PC-3 (cell line): ENCODE measurements at regions of chr7 and their contacts with region 1.

Region 1: DNA sequence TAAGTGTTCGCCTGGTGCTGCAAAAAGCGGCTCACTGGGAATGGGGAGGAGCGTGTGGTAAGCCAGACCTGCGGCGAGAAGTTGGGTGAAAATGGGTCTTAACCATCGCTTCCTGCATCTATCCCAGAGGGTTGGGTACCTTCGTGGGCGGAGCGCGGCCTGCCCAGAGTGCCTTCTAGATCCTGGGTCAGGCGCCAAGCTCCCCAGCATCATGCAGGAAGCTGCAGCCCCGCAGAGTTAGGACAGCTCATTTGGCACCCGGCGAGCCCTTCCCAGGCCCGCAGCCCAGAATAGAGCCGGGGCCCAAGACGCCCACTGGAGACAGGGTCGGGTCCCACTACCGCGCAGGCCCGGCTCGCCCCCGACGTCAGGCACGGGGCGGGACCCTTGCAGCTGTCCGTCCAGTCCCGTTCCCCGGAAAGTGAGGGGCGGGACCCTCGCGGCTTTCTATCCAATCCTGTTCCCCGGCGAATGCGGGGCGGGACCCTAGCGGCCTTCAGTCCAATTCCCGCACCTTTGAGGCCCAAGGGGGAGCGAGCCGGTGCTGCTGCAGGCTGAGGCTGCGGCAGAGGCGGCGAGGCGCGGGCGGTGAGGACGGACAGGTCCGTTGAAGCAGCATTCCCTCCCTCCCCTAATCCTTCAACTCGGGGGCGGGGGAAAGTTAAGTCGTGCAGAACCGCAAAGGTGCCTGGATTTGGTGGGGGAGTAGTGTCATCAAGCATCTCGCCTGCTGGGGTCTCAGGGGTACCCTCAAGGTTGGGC is at the start of gene CROT:
- DNase-seq: peak; percentile 91
- ATAC-seq: peak; percentile 98
- H3K4me3 ChIP-seq: peak within 1 kb of the TSS; percentile 84
- H3K27ac ChIP-seq: peak within 1 kb of the TSS; percentile 60
- H3K4me1 ChIP-seq: peaks cover 27% of the 10 kb centered on the region; the same call in 1 of the 2 replicates
- H3K27me3 ChIP-seq: no peaks in the 10 kb centered on the region
- CTCF ChIP-seq: no peak
- total RNA-seq, gene CROT: 6.9 and 7.7 TPM in 2 replicates

Region 2: GRCh38 chr7:87332321-87332720 is 13.0 kb before region 1 on chr7:
- CTCF ChIA-PET with region 1: no interaction called
- POLR2A ChIA-PET with region 1: no interaction called
- intact Hi-C with region 1: no loop called
- DNase-seq: no peak
- ATAC-seq: no peak
- H3K4me3 ChIP-seq: no peak overlapping the region
- H3K27ac ChIP-seq: no peak overlapping the region
- H3K4me1 ChIP-seq: no peaks in the 10 kb centered on the region
- H3K27me3 ChIP-seq: no peaks in the 10 kb centered on the region
- CTCF ChIP-seq: no peak

Region 3: GRCh38 chr7:87359366-87359765 is 14.0 kb after region 1 on chr7:
- CTCF ChIA-PET with region 1: no interaction called
- POLR2A ChIA-PET with region 1: no interaction called
- intact Hi-C with region 1: loop called (anchors 2 kb)
- DNase-seq: peak; percentile 85
- ATAC-seq: peak; percentile 97
- H3K4me3 ChIP-seq: no peak overlapping the region
- H3K27ac ChIP-seq: no peak overlapping the region
- H3K4me1 ChIP-seq: peaks cover 12% of the 10 kb centered on the region
- H3K27me3 ChIP-seq: no peaks in the 10 kb centered on the region
- CTCF ChIP-seq: no peak

Region 4: GRCh38 chr7:87398446-87398845 is 53.1 kb after region 1 on chr7:
- CTCF ChIA-PET with region 1: no interaction called
- POLR2A ChIA-PET with region 1: no interaction called
- intact Hi-C with region 1: loop called (anchors 2 kb)
- DNase-seq: peak; percentile 73
- ATAC-seq: peak; percentile 87
- H3K4me3 ChIP-seq: no peak overlapping the region
- H3K27ac ChIP-seq: no peak overlapping the region
- H3K4me1 ChIP-seq: peaks cover 29% of the 10 kb centered on the region
- H3K27me3 ChIP-seq: no peaks in the 10 kb centered on the region
- CTCF ChIP-seq: no peak

Region 5: DNA sequence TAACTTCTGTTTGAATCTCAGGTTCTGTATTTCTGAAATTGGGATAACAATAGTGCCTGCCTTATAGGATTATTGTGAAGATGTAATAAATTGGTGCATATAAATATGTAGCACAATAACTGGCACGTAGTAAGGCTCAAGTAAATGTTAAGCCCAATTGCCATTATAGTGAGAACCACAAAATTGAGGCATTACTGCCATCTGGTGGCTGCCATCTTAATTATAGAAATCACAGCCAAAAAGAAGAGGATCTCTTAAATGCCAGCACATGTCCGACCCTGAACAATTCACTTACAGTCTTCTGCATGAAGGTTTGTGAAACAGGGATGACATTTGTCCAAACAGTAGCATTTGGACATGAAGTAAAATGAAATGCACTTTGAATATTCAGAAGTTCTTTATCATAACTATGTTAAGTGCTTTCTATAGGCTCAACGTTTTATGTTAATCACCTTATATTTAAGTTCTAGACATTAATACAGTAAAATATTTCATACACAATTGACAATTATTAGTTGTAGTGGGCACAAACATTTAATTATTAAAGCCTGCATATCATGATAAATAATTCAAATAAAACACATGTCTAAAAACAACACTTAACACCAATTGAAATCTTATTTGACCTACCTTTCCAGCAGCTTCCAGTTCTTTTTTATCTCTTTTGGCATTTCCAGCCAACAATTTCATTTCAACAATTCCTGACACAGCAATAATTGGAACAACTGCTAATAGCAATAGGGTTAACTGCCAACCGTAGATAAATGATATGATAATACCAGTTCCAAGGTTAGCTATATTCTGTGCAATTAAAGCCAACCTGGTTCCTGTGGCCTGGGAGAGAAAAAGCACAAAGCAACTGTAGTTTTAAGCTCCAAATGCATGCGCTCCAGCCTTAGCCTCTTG is 71.6 kb after region 1 on chr7:
- CTCF ChIA-PET with region 1: interaction called, 3 read pairs
- POLR2A ChIA-PET with region 1: interaction called, 3 read pairs
- intact Hi-C with region 1: loop called (anchors 1 kb)
- DNase-seq: peak; percentile 85
- ATAC-seq: 0 out of 2 replicates have a peak, but pooled peaks have one; percentile 11
- H3K4me3 ChIP-seq: no peak overlapping the region
- H3K27ac ChIP-seq: no peak overlapping the region
- H3K4me1 ChIP-seq: peaks cover 25% of the 10 kb centered on the region
- H3K27me3 ChIP-seq: 0 out of 2 replicates have a peak, but pooled peaks cover 7% of the 10 kb centered on the region
- CTCF ChIP-seq: peak; percentile 87